ENCODE measurements at regions of chr20 and their contacts with region 1.

Region 1: DNA sequence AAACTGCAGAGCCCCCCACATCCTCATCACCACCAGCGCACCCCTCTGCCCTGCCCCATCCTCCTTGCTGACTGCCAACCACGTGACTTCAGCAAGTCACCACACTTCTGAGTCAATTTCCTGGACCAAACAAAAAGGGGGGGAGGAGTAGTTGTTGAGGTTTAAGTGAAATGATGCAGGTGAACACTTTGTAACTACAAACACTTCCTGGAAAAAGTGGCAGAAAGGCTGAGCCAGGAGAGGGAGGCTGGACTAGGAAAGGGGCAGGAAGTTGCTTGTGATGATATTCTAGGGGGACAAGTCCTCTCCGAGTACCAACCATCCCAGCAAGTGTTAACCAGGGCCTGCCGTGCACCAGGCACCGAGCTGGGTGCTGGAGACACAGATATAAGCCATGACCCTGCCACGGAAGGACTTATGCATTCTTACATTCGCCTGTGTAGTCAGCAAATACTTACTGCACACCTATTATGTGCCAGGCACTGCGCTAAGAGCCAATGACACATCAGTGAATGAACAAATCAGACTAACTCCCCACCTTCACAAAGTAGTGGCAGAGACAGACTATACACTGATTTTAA is 67.3 kb downstream of the PREX1 start:
- DNase-seq: peak; percentile 82
- H3K4me3 Mint-ChIP-seq: peak overlapping the region; percentile 57
- H3K27ac Mint-ChIP-seq: peak overlapping the region; percentile 95
- H3K4me1 Mint-ChIP-seq: peaks cover 58% of the 10 kb centered on the region
- H3K27me3 Mint-ChIP-seq: no peaks in the 10 kb centered on the region

Region 2: DNA sequence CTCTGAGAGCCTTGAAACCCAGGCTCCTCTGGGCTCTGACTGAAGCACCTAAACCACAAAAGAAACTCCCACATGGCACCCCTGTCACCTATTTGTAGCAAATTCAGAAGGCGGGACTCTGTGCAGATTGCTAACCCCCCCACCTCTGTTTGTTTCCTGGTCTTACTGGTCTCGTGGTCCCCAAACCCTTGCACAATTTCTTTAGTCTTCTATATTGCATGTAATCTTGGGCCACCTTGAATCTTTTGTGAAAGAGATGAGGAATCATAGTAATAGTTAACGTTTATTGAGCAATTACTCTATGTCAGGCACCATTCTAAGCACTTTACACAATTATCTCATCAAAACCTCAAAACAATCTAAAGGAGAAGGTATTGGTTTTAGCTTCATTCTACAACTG is 86.9 kb before region 1 on chr20:
- CTCF ChIA-PET with region 1: no interaction called
- intact Hi-C with region 1: no loop called
- DNase-seq: no peak
- H3K4me3 Mint-ChIP-seq: no peak overlapping the region
- H3K27ac Mint-ChIP-seq: no peak overlapping the region
- H3K4me1 Mint-ChIP-seq: no peaks in the 10 kb centered on the region
- H3K27me3 Mint-ChIP-seq: no peaks in the 10 kb centered on the region

Region 3: GRCh38 chr20:48738399-48739304 is 21.8 kb before region 1 on chr20:
- CTCF ChIA-PET with region 1: no interaction called
- intact Hi-C with region 1: loop called (anchors 1 kb)
- DNase-seq: peak; percentile 88
- H3K4me3 Mint-ChIP-seq: no peak overlapping the region
- H3K27ac Mint-ChIP-seq: peak overlapping the region; percentile 79
- H3K4me1 Mint-ChIP-seq: peaks cover 32% of the 10 kb centered on the region
- H3K27me3 Mint-ChIP-seq: no peaks in the 10 kb centered on the region

Region 4: GRCh38 chr20:48787861-48788375 is 27.4 kb after region 1 on chr20:
- CTCF ChIA-PET with region 1: no interaction called
- intact Hi-C with region 1: loop called (anchors 1 kb)
- DNase-seq: no peak
- H3K4me3 Mint-ChIP-seq: no peak overlapping the region
- H3K27ac Mint-ChIP-seq: no peak overlapping the region
- H3K4me1 Mint-ChIP-seq: peaks cover 50% of the 10 kb centered on the region
- H3K27me3 Mint-ChIP-seq: peaks cover 4% of the 10 kb centered on the region

Region 5: DNA sequence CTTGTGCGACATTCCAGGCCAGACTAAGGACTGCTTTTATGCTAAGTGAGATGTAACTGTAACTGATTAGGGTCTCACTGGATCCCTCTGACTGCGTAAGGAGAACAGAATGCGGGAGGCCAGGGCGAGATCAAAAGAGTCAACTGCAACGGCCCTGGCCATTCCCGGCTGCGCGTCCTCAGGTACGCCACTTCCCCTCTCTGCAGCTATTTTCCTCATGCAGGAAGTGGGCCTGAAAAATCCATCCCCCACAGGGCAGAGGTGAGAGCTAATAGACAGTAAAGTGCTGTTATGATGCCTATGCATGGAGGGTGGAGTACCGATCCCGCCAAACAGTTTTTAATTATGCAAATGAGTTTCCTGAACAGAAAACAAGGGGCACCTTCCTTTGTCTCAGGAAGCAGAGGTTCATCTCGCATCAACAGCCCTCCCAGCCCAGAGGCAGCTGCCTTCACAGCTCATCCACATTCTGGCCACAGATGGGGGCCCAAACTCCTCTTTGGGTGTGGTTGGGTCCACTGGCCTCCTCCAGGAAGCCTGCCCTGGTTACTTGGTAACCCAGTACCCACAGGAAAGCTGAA is 58.0 kb after region 1 on chr20:
- CTCF ChIA-PET with region 1: no interaction called
- intact Hi-C with region 1: loop called (anchors 1 kb)
- DNase-seq: peak; percentile 81
- H3K4me3 Mint-ChIP-seq: peak overlapping the region; percentile 35
- H3K27ac Mint-ChIP-seq: peak overlapping the region; percentile 84
- H3K4me1 Mint-ChIP-seq: peaks cover 77% of the 10 kb centered on the region
- H3K27me3 Mint-ChIP-seq: no peaks in the 10 kb centered on the region

Region 6: GRCh38 chr20:48846498-48847485 is 86.3 kb after region 1 on chr20:
- CTCF ChIA-PET with region 1: no interaction called
- intact Hi-C with region 1: loop called (anchors 1 kb)
- DNase-seq: peak; percentile 87
- H3K4me3 Mint-ChIP-seq: no peak overlapping the region
- H3K27ac Mint-ChIP-seq: peak overlapping the region; percentile 78
- H3K4me1 Mint-ChIP-seq: peaks cover 15% of the 10 kb centered on the region
- H3K27me3 Mint-ChIP-seq: no peaks in the 10 kb centered on the region

Region 7: GRCh38 chr20:49046087-49046900 is 285.8 kb after region 1 on chr20 and contains the start of gene CSE1L:
- CTCF ChIA-PET with region 1: no interaction called
- intact Hi-C with region 1: loop called (anchors 5 kb)
- DNase-seq: peak; percentile 96
- H3K4me3 Mint-ChIP-seq: peak within 1 kb of the TSS; percentile 98
- H3K27ac Mint-ChIP-seq: peak within 1 kb of the TSS; percentile 99
- H3K4me1 Mint-ChIP-seq: peaks cover 38% of the 10 kb centered on the region
- H3K27me3 Mint-ChIP-seq: no peaks in the 10 kb centered on the region
- total RNA-seq, gene CSE1L: 86.1 to 88.9 TPM

Measured in activated naive CD4-positive, alpha-beta T cell treated with anti-CD3 and anti-CD28 coated beads for 36 hours (primary cell).